Activated naive CD4-positive, alpha-beta T cell treated with anti-CD3 and anti-CD28 coated beads for 36 hours (primary cell): ENCODE measurements at regions of chr1 and their contacts with region 1.

Region 1: GRCh38 chr1:22131875-22132486 is 10.9 kb downstream of the WNT4 start:
- DNase-seq: peak; percentile 69
- H3K4me3 Mint-ChIP-seq: no peak overlapping the region
- H3K27ac Mint-ChIP-seq: no peak overlapping the region
- H3K4me1 Mint-ChIP-seq: no peaks in the 10 kb centered on the region
- H3K27me3 Mint-ChIP-seq: peaks cover 2% of the 10 kb centered on the region

Region 2: GRCh38 chr1:22204941-22205913 is 73.2 kb after region 1 on chr1:
- CTCF ChIA-PET with region 1: no interaction called
- intact Hi-C with region 1: no loop called
- DNase-seq: no peak
- H3K4me3 Mint-ChIP-seq: no peak overlapping the region
- H3K27ac Mint-ChIP-seq: no peak overlapping the region
- H3K4me1 Mint-ChIP-seq: no peaks in the 10 kb centered on the region
- H3K27me3 Mint-ChIP-seq: peaks cover 24% of the 10 kb centered on the region

Region 3: GRCh38 chr1:22275721-22276395 is 143.9 kb after region 1 on chr1:
- CTCF ChIA-PET with region 1: interaction called, 4 read pairs
- intact Hi-C with region 1: loop called (anchors 1 kb)
- DNase-seq: peak; percentile 62
- H3K4me3 Mint-ChIP-seq: no peak overlapping the region
- H3K27ac Mint-ChIP-seq: no peak overlapping the region
- H3K4me1 Mint-ChIP-seq: no peaks in the 10 kb centered on the region
- H3K27me3 Mint-ChIP-seq: peaks cover 7% of the 10 kb centered on the region

Region 4: GRCh38 chr1:22641906-22642636 is 510.1 kb after region 1 on chr1:
- CTCF ChIA-PET with region 1: no interaction called
- intact Hi-C with region 1: loop called (anchors 2 kb)
- DNase-seq: peak; percentile 78
- H3K4me3 Mint-ChIP-seq: no peak overlapping the region
- H3K27ac Mint-ChIP-seq: no peak overlapping the region
- H3K4me1 Mint-ChIP-seq: no peaks in the 10 kb centered on the region
- H3K27me3 Mint-ChIP-seq: peaks cover 5% of the 10 kb centered on the region